GM12878 (cell line): ENCODE measurements at regions of chr18 and their contacts with region 1.

Region 1: GRCh38 chr18:44803019-44803650 is 122.4 kb downstream of the SETBP1 start:
- DNase-seq: no peak
- ATAC-seq: peak; percentile 52
- H3K4me3 ChIP-seq: 0 out of 2 replicates have a peak overlapping the region, but pooled peaks have one; percentile 12
- H3K27ac ChIP-seq: no peak overlapping the region
- H3K4me1 ChIP-seq: peaks cover 43% of the 10 kb centered on the region
- H3K27me3 ChIP-seq: no peaks in the 10 kb centered on the region
- CTCF ChIP-seq: no peak
- EP300 ChIP-seq: no peak
- POLR2A ChIP-seq: no peak
- RAD21 ChIP-seq: no peak

Region 2: GRCh38 chr18:43148231-43148630 is 1654.9 kb before region 1 on chr18:
- CTCF ChIA-PET with region 1: no interaction called
- POLR2A ChIA-PET with region 1: no interaction called
- RAD21 ChIA-PET with region 1: no interaction called
- SMC1A ChIA-PET with region 1: no interaction called
- in situ Hi-C with region 1: no loop called
- intact Hi-C with region 1: no loop called
- DNase-seq: no peak
- ATAC-seq: no peak
- H3K4me3 ChIP-seq: no peak overlapping the region
- H3K27ac ChIP-seq: no peak overlapping the region
- H3K4me1 ChIP-seq: no peaks in the 10 kb centered on the region
- H3K27me3 ChIP-seq: no peaks in the 10 kb centered on the region
- CTCF ChIP-seq: no peak
- EP300 ChIP-seq: no peak
- POLR2A ChIP-seq: no peak
- RAD21 ChIP-seq: no peak

Region 3: GRCh38 chr18:44770665-44771064 is 32.5 kb before region 1 on chr18:
- CTCF ChIA-PET with region 1: interaction called, 3 read pairs
- POLR2A ChIA-PET with region 1: no interaction called
- RAD21 ChIA-PET with region 1: interaction called, 4 read pairs
- SMC1A ChIA-PET with region 1: interaction called, 21 read pairs
- in situ Hi-C with region 1: no loop called
- intact Hi-C with region 1: no loop called
- DNase-seq: no peak
- ATAC-seq: no peak
- H3K4me3 ChIP-seq: no peak overlapping the region
- H3K27ac ChIP-seq: no peak overlapping the region
- H3K4me1 ChIP-seq: no peaks in the 10 kb centered on the region
- H3K27me3 ChIP-seq: no peaks in the 10 kb centered on the region
- CTCF ChIP-seq: no peak
- EP300 ChIP-seq: no peak
- POLR2A ChIP-seq: no peak
- RAD21 ChIP-seq: no peak

Region 4: GRCh38 chr18:44819944-44820510 is 16.9 kb after region 1 on chr18:
- CTCF ChIA-PET with region 1: interaction called, 4 read pairs
- POLR2A ChIA-PET with region 1: interaction called, 10 read pairs
- RAD21 ChIA-PET with region 1: interaction called, 12 read pairs
- SMC1A ChIA-PET with region 1: interaction called, 43 read pairs
- in situ Hi-C with region 1: no loop called
- intact Hi-C with region 1: no loop called
- DNase-seq: no peak
- ATAC-seq: peak; percentile 54
- H3K4me3 ChIP-seq: no peak overlapping the region
- H3K27ac ChIP-seq: no peak overlapping the region
- H3K4me1 ChIP-seq: peaks cover 13% of the 10 kb centered on the region
- H3K27me3 ChIP-seq: no peaks in the 10 kb centered on the region
- CTCF ChIP-seq: no peak
- EP300 ChIP-seq: no peak
- POLR2A ChIP-seq: no peak
- RAD21 ChIP-seq: no peak

Region 5: DNA sequence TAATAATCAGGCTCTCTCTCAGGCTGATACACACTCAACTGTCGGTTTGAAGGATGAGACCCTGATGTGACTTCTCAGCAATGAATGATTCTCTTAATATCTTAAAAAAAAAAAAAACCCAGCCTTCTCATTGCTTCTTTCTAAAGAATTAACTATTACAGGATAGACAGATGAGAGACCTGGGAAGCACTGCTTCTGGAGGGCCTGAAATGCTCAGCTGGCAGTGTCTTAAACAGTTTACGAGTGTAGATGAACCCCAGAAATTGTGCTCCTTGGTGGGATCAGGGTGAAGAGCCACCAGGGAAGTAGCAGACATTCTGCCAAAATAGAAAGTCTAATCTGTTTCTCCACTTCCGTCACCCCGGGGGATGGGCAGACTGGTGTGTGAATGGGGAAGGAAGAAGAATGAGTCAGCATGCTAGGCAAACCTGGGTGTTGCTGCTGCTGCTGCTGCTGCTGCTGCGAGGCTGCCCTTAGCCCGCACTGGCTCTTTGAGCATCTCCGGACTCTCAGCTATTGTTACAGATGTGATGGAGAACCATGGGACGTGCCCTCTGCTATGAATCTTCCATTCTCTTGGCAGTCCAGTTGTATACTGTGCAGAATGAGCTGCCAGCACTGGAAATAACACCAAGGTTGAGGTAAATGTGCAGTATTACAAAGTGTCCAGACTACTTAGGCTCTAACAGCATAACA is 36.0 kb after region 1 on chr18:
- CTCF ChIA-PET with region 1: interaction called, 3 read pairs
- POLR2A ChIA-PET with region 1: interaction called, 4 read pairs
- RAD21 ChIA-PET with region 1: interaction called, 7 read pairs
- SMC1A ChIA-PET with region 1: interaction called, 15 read pairs
- in situ Hi-C with region 1: no loop called
- intact Hi-C with region 1: no loop called
- DNase-seq: peak; percentile 64
- ATAC-seq: peak; percentile 96
- H3K4me3 ChIP-seq: peak overlapping the region; percentile 18; the same call in 1 of the 2 replicates
- H3K27ac ChIP-seq: peak overlapping the region; percentile 40
- H3K4me1 ChIP-seq: peaks cover 23% of the 10 kb centered on the region
- H3K27me3 ChIP-seq: no peaks in the 10 kb centered on the region
- CTCF ChIP-seq: no peak
- EP300 ChIP-seq: 0 out of 4 replicates have a peak, but pooled peaks of 1 of the 2 experiments have one; percentile 44
- POLR2A ChIP-seq: no peak
- RAD21 ChIP-seq: no peak